Cardiac septum (tissue), 1 donor: ENCODE measurements at regions of chr5 and their contacts with region 1.

Region 1: DNA sequence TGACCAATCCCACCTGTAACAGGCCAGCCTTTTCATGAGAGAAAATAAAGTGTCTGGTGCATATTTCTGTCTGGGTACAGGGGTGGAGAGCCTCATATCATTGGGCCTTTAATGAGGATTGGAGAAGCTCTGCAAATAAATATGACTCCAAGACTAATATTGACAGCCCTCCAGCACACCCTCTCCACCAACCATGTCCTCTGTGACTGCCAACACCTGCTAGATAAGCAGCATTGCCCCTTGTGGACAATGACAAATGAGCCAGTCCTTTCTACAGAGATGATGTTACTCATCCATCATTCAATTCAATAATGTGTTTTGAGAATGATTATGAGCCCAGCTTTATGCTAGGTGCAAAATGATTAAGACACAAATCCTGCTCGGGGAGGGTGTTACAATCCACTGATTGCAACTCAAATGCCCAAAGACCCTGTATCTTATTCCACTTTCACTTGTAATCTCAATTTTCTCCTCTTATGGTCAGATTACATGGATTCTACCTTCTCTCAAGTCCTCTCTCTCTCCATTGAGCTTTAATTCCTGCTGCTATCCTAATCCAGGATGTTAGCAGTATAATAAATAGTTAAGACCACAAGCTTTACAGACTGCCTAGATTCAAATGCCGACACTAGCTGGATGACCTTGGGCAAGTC is 2.1 kb upstream of the GFRA3 start:
- DNase-seq: no peak

Region 2: DNA sequence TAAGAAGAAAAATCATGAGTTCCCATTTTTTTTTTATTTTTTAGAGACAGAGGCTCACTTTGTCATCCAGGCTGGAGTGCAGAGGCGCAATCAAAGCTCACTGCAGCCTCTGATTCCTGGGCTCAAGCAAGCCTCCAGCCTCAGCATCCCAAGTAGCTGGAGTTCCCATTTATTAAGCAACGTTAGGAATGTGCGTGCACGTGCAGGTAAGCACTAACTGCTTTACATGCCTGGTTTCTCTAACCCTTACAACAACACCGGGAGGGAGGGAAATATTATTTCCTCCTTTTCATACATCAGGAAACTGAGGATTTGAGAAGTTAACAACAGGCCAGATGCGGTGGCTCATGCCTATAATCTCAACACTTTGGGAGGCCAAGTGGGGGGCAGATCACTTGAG is 47.1 kb before region 1 on chr5:
- intact Hi-C with region 1: loop called (anchors 2 kb)
- DNase-seq: no peak